CD8-positive, alpha-beta memory T cell (primary cell): ENCODE measurements at regions of chr11 and their contacts with region 1.

Region 1: GRCh38 chr11:65418711-65419459 is 3.7 kb upstream of the NEAT1 start:
- DNase-seq: peak; percentile 58 to 90 (median 75)
- H3K4me3 ChIP-seq: peak overlapping the region; percentile 85
- H3K4me3 Mint-ChIP-seq: peak overlapping the region; percentile 93 to 97 (median 94)
- H3K27ac ChIP-seq: peak overlapping the region; percentile 98
- H3K27ac Mint-ChIP-seq: peak overlapping the region; percentile 93 to 99 (median 97)
- H3K4me1 ChIP-seq: peaks cover 59% of the 10 kb centered on the region
- H3K4me1 Mint-ChIP-seq: peaks cover 58 to 66% (median 62%) of the 10 kb centered on the region in 3 donors
- H3K27me3 ChIP-seq: no peaks in the 10 kb centered on the region
- H3K27me3 Mint-ChIP-seq: peaks cover 0 to 21% of the 10 kb centered on the region in 2 donors

Region 2: DNA sequence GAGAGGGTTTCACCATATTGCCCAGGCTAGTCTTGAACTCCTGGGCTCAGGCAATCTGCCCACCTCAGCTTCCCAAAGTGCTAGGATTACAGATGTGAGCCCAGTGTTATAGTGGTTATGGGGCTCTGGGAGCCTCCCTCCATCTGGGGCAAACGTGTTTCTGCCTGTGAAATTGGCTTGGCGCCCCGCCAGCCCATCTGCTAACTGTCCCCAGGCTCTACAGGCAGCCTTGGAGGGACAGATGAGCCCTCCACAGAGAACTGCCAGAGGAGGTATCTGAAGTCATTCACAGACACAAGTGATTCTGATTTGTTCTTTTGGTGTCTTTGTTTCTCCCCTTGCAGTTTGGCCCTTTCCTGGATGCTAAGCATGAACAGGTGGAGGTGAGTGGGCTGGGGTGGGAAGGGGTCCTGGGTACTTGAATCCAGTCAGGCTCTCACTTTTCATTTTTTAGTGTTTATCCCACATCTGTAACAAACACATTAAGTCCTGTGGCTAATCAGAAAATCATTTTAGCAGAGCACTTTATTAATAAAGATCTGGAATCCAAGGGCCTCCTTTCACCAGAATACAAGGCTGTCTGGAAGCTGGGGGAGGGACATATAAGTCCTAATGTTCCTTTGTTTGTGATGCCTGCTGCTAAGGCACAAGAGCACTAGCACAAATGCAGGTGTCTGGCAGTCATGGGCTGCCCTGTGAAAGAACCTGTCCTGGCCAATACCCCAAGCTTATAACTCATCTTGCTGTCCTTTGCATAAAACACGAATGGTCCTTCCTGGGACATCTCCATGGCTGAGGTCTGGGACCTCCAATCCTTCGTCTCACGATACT is 130.0 kb before region 1 on chr11:
- CTCF ChIA-PET with region 1: no interaction called
- POLR2A ChIA-PET with region 1: no interaction called
- DNase-seq: no peak
- H3K4me3 ChIP-seq: no peak overlapping the region
- H3K4me3 Mint-ChIP-seq: no peak overlapping the region
- H3K27ac ChIP-seq: no peak overlapping the region
- H3K27ac Mint-ChIP-seq: no peak overlapping the region
- H3K4me1 ChIP-seq: no peaks in the 10 kb centered on the region
- H3K4me1 Mint-ChIP-seq: no peaks in the 10 kb centered on the region
- H3K27me3 ChIP-seq: no peaks in the 10 kb centered on the region
- H3K27me3 Mint-ChIP-seq: peaks cover 0 to 1% of the 10 kb centered on the region in 2 donors

Region 3: GRCh38 chr11:65382033-65382807 is 36.7 kb before region 1 on chr11 and contains the start of gene SLC25A45:
- CTCF ChIA-PET with region 1: interaction called, 54 read pairs
- POLR2A ChIA-PET with region 1: interaction called, 19 read pairs
- DNase-seq: peak; percentile 84 to 96 (median 87)
- H3K4me3 ChIP-seq: peak within 1 kb of the TSS; percentile 91
- H3K4me3 Mint-ChIP-seq: peak within 1 kb of the TSS; percentile 83 to 94 (median 91)
- H3K27ac ChIP-seq: peak within 1 kb of the TSS; percentile 96
- H3K27ac Mint-ChIP-seq: peak within 1 kb of the TSS; percentile 97 to 100 (median 99)
- H3K4me1 ChIP-seq: peaks cover 54% of the 10 kb centered on the region
- H3K4me1 Mint-ChIP-seq: peaks cover 45 to 61% (median 47%) of the 10 kb centered on the region in 3 donors
- H3K27me3 ChIP-seq: no peaks in the 10 kb centered on the region
- H3K27me3 Mint-ChIP-seq: no peaks in the 10 kb centered on the region
- total RNA-seq, gene SLC25A45: 13.3 to 13.8 TPM

Region 4: GRCh38 chr11:65432686-65433582 is 14.0 kb after region 1 on chr11:
- CTCF ChIA-PET with region 1: interaction called, 19 read pairs
- POLR2A ChIA-PET with region 1: interaction called, 23 read pairs
- DNase-seq: peak in 3 of 5 donors; percentile 30 to 68 (median 55)
- H3K4me3 ChIP-seq: no peak overlapping the region
- H3K4me3 Mint-ChIP-seq: peak overlapping the region in 3 of 7 donors; percentile 51 to 70 (median 63)
- H3K27ac ChIP-seq: no peak overlapping the region
- H3K27ac Mint-ChIP-seq: peak overlapping the region; percentile 4 to 98 (median 86)
- H3K4me1 ChIP-seq: peaks cover 61% of the 10 kb centered on the region
- H3K4me1 Mint-ChIP-seq: peaks cover 82 to 96% (median 95%) of the 10 kb centered on the region in 3 donors
- H3K27me3 ChIP-seq: no peaks in the 10 kb centered on the region
- H3K27me3 Mint-ChIP-seq: no peaks in the 10 kb centered on the region

Region 5: GRCh38 chr11:65471410-65471762 is 52.5 kb after region 1 on chr11:
- CTCF ChIA-PET with region 1: interaction called, 24 read pairs
- POLR2A ChIA-PET with region 1: interaction called, 33 read pairs
- DNase-seq: peak in 1 of 5 donors; percentile 21
- H3K4me3 ChIP-seq: peak overlapping the region; percentile 25
- H3K4me3 Mint-ChIP-seq: peak overlapping the region in 1 of 7 donors; percentile 73
- H3K27ac ChIP-seq: peak overlapping the region; percentile 73
- H3K27ac Mint-ChIP-seq: peak overlapping the region; percentile 96 to 99 (median 98)
- H3K4me1 ChIP-seq: peaks cover 21% of the 10 kb centered on the region
- H3K4me1 Mint-ChIP-seq: peaks cover 16 to 33% (median 20%) of the 10 kb centered on the region in 3 donors
- H3K27me3 ChIP-seq: no peaks in the 10 kb centered on the region
- H3K27me3 Mint-ChIP-seq: no peaks in the 10 kb centered on the region

Region 6: GRCh38 chr11:65497141-65498041 is 78.5 kb after region 1 on chr11:
- CTCF ChIA-PET with region 1: interaction called, 448 read pairs
- POLR2A ChIA-PET with region 1: interaction called, 1,366 read pairs
- DNase-seq: peak; percentile 96 to 99 (median 97)
- H3K4me3 ChIP-seq: peak overlapping the region; percentile 97
- H3K4me3 Mint-ChIP-seq: no peak overlapping the region
- H3K27ac ChIP-seq: peak overlapping the region; percentile 95
- H3K27ac Mint-ChIP-seq: no peak overlapping the region
- H3K4me1 ChIP-seq: peaks cover 16% of the 10 kb centered on the region
- H3K4me1 Mint-ChIP-seq: peaks cover 13 to 30% (median 14%) of the 10 kb centered on the region in 3 donors
- H3K27me3 ChIP-seq: no peaks in the 10 kb centered on the region
- H3K27me3 Mint-ChIP-seq: peaks cover 0 to 3% of the 10 kb centered on the region in 2 donors